ENCODE measurements at regions of chr14 and their contacts with region 1.

Region 1: DNA sequence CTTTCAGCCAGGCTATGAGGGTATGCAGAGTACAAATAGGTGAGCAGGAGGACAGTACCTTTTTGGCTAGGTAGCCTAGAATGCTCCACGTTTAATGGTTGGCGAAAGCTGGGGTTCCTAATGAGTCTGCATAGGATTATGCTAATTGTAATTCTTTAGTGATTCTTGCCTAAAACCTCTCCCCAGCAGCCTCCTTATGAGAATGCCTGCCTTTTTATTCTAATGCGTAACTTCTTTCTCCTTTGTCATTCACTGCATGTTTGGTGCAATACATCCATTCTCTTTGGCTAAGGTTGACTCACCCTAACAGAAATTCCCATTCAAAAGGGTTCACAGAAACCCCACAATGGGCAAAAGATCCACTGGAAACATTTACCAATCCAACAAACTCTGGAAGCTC is 752.2 kb downstream of the FSCB start:
- DNase-seq: no peak
- ATAC-seq: no peak
- H3K4me3 ChIP-seq: no peak overlapping the region
- H3K27ac ChIP-seq: no peak overlapping the region
- H3K4me1 ChIP-seq: no peaks in the 10 kb centered on the region
- H3K27me3 ChIP-seq: no peaks in the 10 kb centered on the region
- CTCF ChIP-seq: no peak

Region 2: DNA sequence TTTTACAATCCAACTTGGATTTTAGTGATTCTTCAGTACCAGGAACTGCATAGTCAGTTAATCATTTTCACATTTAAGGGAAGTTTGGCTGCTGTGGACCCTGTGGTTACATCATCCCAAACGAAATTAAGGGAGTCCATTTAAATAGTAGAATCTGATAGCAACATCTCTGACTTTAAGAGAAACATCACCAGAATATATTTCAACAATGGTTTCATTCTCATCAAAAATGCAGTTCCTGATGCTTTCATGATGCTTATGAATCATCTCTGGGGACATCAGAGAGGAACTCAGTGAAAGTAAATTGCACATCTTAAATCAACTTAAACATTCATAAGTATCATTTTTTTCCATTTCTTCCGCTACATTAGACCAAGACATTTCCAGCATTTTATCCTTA is 418.5 kb before region 1 on chr14:
- intact Hi-C with region 1: no loop called
- DNase-seq: no peak
- ATAC-seq: no peak
- H3K4me3 ChIP-seq: no peak overlapping the region
- H3K27ac ChIP-seq: no peak overlapping the region
- H3K4me1 ChIP-seq: no peaks in the 10 kb centered on the region
- H3K27me3 ChIP-seq: no peaks in the 10 kb centered on the region
- CTCF ChIP-seq: no peak

Region 3: DNA sequence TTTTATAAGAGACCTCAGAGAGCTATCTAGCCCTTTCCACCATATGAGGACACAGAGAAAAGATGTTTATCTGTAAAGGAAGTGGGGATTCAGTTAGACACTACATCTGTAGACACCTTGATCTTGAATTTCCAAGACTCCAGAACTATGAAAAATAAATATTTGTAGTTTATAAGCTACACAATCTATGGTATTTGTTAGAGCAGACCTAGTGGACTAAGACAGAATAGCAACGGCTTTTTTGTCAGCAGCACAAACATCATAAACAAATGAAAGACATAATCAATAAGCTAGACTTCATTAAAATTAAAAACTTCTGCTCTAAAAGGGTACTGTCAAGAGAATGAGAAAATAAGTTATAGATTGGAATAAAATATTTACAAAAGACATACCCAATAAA is 57.8 kb before region 1 on chr14:
- intact Hi-C with region 1: loop called in 1 of 2 experiments (anchors 5 kb)
- DNase-seq: no peak
- ATAC-seq: no peak
- H3K4me3 ChIP-seq: no peak overlapping the region
- H3K27ac ChIP-seq: no peak overlapping the region
- H3K4me1 ChIP-seq: no peaks in the 10 kb centered on the region
- H3K27me3 ChIP-seq: no peaks in the 10 kb centered on the region
- CTCF ChIP-seq: no peak

Measured in psoas muscle (tissue), 8 donors.